Mucosa of descending colon (tissue), 3 donors: ENCODE measurements at regions of chr9 and their contacts with region 1.

Region 1: GRCh38 chr9:5899292-5899691 is 8.6 kb downstream of the MLANA start:
- DNase-seq: no peak
- ATAC-seq: no peak
- H3K4me3 ChIP-seq: no peak overlapping the region
- H3K4me1 ChIP-seq: no peaks in the 10 kb centered on the region
- CTCF ChIP-seq: no peak

Region 2: GRCh38 chr9:6049798-6050197 is 150.5 kb after region 1 on chr9:
- intact Hi-C with region 1: loop called in 1 of 2 experiments (anchors 10 kb)
- DNase-seq: peak in 1 of 3 donors; percentile 41
- ATAC-seq: peak; percentile 77
- H3K4me3 ChIP-seq: no peak overlapping the region
- H3K4me1 ChIP-seq: peaks cover 5% of the 10 kb centered on the region
- CTCF ChIP-seq: no peak